ENCODE measurements at regions of chr13 and their contacts with region 1.

Region 1: GRCh38 chr13:48580185-48580803 is 47.4 kb upstream of the RCBTB2 start:
- DNase-seq: peak; percentile 56
- ATAC-seq: peak; percentile 75
- H3K4me3 ChIP-seq: no peak overlapping the region
- H3K27ac ChIP-seq: no peak overlapping the region
- H3K4me1 ChIP-seq: no peaks in the 10 kb centered on the region
- H3K27me3 ChIP-seq: peaks cover 16% of the 10 kb centered on the region
- CTCF ChIP-seq: peak; percentile 80
- POLR2A ChIP-seq: no peak
- RAD21 ChIP-seq: peak; percentile 77

Region 2: DNA sequence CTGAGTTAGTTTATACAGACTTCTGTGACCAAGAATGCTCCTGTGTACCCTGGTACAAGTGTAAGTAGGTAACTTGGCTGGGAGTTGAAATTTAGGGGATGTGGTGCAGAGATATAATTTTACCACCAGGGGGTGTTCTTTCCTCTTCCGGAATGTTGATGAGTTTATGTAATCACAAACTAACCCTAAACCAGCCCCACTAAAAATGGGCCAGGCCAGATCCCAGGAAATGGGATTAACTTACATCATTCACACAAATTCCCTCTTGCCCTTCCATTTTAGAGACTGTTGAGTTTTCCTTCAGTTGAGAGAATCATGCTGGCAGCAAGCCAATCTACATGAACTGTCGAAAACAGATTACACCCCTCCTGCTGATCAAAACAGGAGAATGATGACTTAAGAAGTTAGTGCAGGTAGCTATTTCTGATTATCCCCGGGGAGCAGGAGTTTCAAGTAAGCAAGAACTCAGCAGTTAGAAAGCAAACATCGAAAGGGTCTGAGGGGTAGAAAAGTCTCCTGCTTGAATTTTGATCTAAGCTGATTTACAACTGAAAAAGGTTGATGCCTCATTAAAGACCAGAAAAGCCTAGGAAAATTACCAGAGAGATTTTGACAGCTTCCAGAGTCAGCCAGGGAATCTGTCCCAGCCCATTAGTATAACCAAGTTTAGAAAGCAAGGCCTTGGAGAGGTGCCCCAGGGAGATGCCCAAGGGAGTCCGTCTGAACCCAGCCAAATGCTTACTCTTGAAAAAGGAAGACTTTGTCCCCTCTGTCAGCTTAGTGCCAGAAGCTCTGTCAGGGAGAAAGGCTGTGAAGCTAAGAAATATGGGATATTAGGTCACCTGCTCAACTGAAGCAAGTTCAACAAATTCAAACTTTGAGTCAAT is 453.1 kb before region 1 on chr13:
- CTCF ChIA-PET with region 1: interaction called, 5 read pairs
- POLR2A ChIA-PET with region 1: no interaction called
- dilution Hi-C with region 1: no loop called
- in situ Hi-C with region 1: loop called (anchors 5 kb)
- intact Hi-C with region 1: loop called (anchors 1 kb)
- DNase-seq: peak; percentile 60
- ATAC-seq: peak; percentile 77
- H3K4me3 ChIP-seq: no peak overlapping the region
- H3K27ac ChIP-seq: no peak overlapping the region
- H3K4me1 ChIP-seq: peaks cover 2% of the 10 kb centered on the region; the same call in 1 of the 2 replicates
- H3K27me3 ChIP-seq: peaks cover 2% of the 10 kb centered on the region; the same call in 1 of the 2 replicates
- CTCF ChIP-seq: peak; percentile 73
- POLR2A ChIP-seq: no peak
- RAD21 ChIP-seq: peak; percentile 60

Region 3: GRCh38 chr13:48233046-48233907 is 347.0 kb before region 1 on chr13 and contains the start of gene ITM2B:
- CTCF ChIA-PET with region 1: interaction called, 3 read pairs
- POLR2A ChIA-PET with region 1: no interaction called
- dilution Hi-C with region 1: no loop called
- in situ Hi-C with region 1: no loop called
- intact Hi-C with region 1: loop called (anchors 5 kb)
- DNase-seq: peak; percentile 65
- ATAC-seq: peak; percentile 95
- H3K4me3 ChIP-seq: peak within 1 kb of the TSS; percentile 83
- H3K27ac ChIP-seq: peak within 1 kb of the TSS; percentile 65
- H3K4me1 ChIP-seq: peaks cover 8% of the 10 kb centered on the region
- H3K27me3 ChIP-seq: peaks cover 6% of the 10 kb centered on the region; the same call in 1 of the 2 replicates
- CTCF ChIP-seq: peak; percentile 36
- POLR2A ChIP-seq: peak; percentile 86
- RAD21 ChIP-seq: no peak
- total RNA-seq, gene ITM2B: 51.1 and 76.9 TPM in 2 replicates

Region 4: DNA sequence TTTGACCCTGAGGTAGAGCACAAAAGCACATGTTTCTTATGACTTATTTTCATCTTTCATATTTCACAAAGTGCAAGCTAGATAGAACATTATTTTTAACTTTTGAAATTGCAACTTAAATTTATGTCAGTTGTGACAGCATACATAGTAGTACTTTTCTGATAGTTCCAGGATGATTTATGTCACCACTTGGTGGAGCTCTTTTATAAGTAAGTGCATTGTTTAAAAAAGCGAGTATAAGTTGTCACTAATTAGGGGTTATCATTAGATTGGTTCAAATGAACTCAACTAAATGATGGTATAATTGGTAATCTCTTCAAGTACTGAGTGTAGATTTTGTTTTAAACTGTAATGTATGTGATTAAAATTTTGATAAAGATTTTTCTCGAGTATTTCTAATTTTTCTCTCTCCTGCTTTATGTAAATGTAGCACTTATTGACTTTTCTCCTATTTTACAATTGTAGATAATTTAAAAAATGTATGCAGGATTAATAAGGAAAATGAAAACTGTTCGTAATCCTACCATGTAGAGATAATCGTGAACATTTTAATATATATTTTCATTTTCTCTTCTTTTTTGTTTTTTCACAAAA is 245.7 kb before region 1 on chr13:
- CTCF ChIA-PET with region 1: interaction called, 28 read pairs
- POLR2A ChIA-PET with region 1: no interaction called
- dilution Hi-C with region 1: no loop called
- in situ Hi-C with region 1: loop called (anchors 10 kb)
- intact Hi-C with region 1: loop called (anchors 1 kb)
- DNase-seq: peak; percentile 45
- ATAC-seq: peak; percentile 62
- H3K4me3 ChIP-seq: no peak overlapping the region
- H3K27ac ChIP-seq: no peak overlapping the region
- H3K4me1 ChIP-seq: peaks cover 4% of the 10 kb centered on the region; the same call in 1 of the 2 replicates
- H3K27me3 ChIP-seq: no peaks in the 10 kb centered on the region
- CTCF ChIP-seq: peak; percentile 66
- POLR2A ChIP-seq: no peak
- RAD21 ChIP-seq: peak; percentile 71

Region 5: GRCh38 chr13:48412881-48413351 is 167.4 kb before region 1 on chr13 and contains the start of gene LPAR6:
- CTCF ChIA-PET with region 1: interaction called, 3 read pairs
- POLR2A ChIA-PET with region 1: no interaction called
- dilution Hi-C with region 1: no loop called
- in situ Hi-C with region 1: no loop called
- intact Hi-C with region 1: loop called (anchors 5 kb)
- DNase-seq: peak; percentile 73
- ATAC-seq: peak; percentile 77
- H3K4me3 ChIP-seq: peak within 1 kb of the TSS; percentile 90
- H3K27ac ChIP-seq: peak within 1 kb of the TSS; percentile 83; the same call in 1 of the 2 replicates
- H3K4me1 ChIP-seq: no peaks in the 10 kb centered on the region
- H3K27me3 ChIP-seq: no peaks in the 10 kb centered on the region
- CTCF ChIP-seq: no peak
- POLR2A ChIP-seq: no peak
- RAD21 ChIP-seq: no peak
- total RNA-seq, gene LPAR6: 1.4 and 4.4 TPM in 2 replicates

Region 6: GRCh38 chr13:48532506-48533499 is 47.5 kb before region 1 on chr13 and contains the start of gene RCBTB2:
- CTCF ChIA-PET with region 1: no interaction called
- POLR2A ChIA-PET with region 1: interaction called, 16 read pairs
- dilution Hi-C with region 1: no loop called
- in situ Hi-C with region 1: no loop called
- intact Hi-C with region 1: no loop called
- DNase-seq: peak; percentile 96
- ATAC-seq: peak; percentile 97
- H3K4me3 ChIP-seq: peak within 1 kb of the TSS; percentile 86
- H3K27ac ChIP-seq: peak within 1 kb of the TSS; percentile 96
- H3K4me1 ChIP-seq: peaks cover 5% of the 10 kb centered on the region
- H3K27me3 ChIP-seq: no peaks in the 10 kb centered on the region
- CTCF ChIP-seq: no peak
- POLR2A ChIP-seq: peak; percentile 86
- RAD21 ChIP-seq: no peak
- total RNA-seq, gene RCBTB2: 5.2 and 5.3 TPM in 2 replicates

Measured in IMR-90 (cell line).